A549 (cell line): ENCODE measurements at regions of chr9 and their contacts with region 1.

Region 1: DNA sequence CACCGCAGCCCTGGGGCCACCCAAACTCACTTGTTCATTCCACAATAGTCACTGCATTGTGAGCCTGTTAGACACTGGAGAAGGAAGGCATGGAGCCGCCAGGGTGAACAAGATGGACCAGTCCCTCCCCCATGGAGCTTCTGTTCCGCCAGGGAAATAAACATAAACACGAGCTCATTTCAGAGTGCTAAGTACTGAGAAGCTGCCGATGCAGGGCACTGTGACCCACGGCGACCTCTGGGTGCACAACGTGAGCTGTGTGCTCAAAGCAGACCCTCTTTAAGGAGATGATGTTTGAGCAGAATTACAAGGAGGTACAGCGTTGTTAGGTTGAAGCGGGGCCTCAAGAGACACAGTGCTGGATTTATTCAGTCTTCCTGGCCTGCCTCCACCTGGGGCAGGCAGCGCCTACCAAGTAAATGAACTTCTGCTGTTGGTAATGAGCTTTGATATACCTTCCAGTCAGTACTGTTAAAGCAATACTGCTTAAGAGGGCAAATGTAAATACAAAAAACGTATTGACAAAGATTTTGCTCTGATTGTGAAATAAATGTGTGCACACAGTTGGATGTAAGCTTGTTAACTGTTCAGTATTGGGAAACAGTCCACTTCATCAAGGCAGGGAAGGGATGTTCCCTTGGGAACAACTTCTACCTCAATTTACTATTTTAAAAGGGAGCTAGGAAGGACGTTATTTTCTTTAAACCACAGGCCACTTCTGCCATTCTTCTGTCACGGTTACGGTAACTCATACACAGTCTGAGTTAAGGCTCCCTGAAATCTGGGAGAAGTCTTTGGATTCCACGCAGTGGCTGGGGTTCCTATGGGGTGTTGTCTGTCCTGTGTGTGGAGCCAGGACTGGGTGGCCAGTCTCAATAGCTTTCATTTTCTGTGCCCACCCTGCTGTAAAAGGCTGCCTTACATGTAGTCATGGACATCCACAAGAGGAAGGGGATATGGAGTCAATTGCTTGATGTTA is 48.9 kb upstream of the DMRT1 start:
- DNase-seq: no peak
- ATAC-seq: no peak
- H3K4me3 ChIP-seq: no peak overlapping the region
- H3K27ac ChIP-seq: no peak overlapping the region
- H3K4me1 ChIP-seq: no peaks in the 10 kb centered on the region
- CTCF ChIP-seq: no peak
- EP300 ChIP-seq: no peak
- POLR2A ChIP-seq: no peak
- RAD21 ChIP-seq: no peak

Region 2: DNA sequence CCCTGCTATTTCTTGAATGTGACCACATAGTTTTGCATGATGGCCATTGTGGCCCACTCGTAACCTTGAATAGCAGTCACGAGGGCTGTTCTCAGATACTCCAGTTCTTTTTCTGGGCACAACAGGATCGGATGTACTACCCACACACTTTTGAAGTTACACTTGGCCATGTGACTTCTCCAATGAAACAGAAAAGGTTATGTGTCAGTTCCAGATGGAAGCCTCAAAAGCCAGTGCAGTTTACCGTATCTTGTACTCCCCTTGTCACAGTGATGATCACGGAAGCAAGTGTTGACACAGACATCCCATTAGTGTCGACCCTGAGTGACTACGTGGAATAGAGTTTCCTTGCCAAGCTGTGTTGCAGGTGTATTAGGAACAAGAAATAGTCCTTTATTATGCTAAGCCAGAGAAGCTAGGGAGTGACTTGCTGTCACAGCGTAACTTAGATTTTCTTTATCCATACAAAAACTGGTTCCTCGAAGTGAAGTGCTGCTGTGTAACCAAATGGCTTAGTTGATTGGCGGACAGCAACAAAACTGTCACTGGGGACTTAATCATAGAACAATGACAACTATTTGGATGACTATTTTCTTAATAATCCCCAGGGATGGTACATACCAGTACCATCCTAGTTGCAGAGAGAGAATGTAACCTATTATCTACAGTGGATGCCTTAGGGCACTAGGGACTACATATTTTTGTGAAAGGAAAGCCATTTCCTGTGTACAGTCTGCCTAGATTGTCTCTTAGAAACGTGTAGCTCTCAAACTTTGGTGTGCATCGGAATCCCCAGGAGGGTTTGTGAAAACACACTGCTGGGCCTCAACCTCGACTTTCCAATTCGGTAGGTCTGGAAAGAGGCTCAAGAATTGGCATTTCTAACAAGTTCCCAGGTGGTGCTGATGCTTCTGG is 41.2 kb before region 1 on chr9:
- CTCF ChIA-PET with region 1: no interaction called
- POLR2A ChIA-PET with region 1: no interaction called
- DNase-seq: no peak
- ATAC-seq: peak in 1 of 2 experiments; percentile 54; a peak in 3 of 6 replicates
- H3K4me3 ChIP-seq: no peak overlapping the region
- H3K27ac ChIP-seq: peak overlapping the region; percentile 45 to 64; a peak in 2 of 6 replicates
- H3K4me1 ChIP-seq: peaks cover 28% of the 10 kb centered on the region
- CTCF ChIP-seq: no peak
- EP300 ChIP-seq: no peak
- POLR2A ChIP-seq: no peak
- RAD21 ChIP-seq: no peak

Region 3: GRCh38 chr9:806285-807156 is 13.9 kb after region 1 on chr9:
- CTCF ChIA-PET with region 1: interaction called, 12 read pairs
- POLR2A ChIA-PET with region 1: no interaction called
- DNase-seq: peak; percentile 48 to 50
- ATAC-seq: peak in 1 of 2 experiments; percentile 77; a peak in 3 of 6 replicates
- H3K4me3 ChIP-seq: no peak overlapping the region
- H3K27ac ChIP-seq: no peak overlapping the region
- H3K4me1 ChIP-seq: peaks cover 12% of the 10 kb centered on the region
- CTCF ChIP-seq: peak; percentile 76
- EP300 ChIP-seq: no peak
- POLR2A ChIP-seq: no peak
- RAD21 ChIP-seq: peak; percentile 79 to 81